CD4-positive, alpha-beta T cell (primary cell): ENCODE measurements at regions of chrX and their contacts with region 1.

Region 1: DNA sequence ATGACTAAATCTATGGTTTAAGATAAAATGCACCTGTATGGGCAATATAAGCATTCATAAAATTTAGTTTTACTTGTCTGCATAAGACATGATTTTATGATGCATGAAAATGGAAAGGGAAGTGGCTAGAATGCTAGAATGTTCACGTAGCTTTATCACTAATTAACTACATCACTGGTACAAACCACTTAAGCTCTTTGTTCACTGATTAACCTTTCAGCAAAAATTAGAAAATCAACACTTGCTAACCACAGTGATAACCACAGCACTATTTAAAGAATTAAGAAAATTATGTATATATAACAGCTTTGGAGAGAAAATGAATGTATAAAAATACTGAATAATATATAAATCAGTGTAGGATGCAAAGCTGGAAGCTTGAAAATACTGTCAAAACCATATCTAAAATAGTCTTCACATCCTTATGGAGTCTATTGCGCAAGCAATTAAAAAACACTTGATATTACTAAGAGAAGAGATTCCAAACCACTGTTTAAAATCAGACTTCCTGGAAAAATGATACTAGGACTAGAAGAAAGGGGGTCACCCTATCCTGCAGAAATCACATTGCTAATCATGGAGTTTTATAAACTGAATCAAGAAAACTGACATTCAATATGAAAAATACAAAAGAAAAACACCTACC is 51.9 kb downstream of the EFHC2 start:
- DNase-seq: peak in 1 of 14 experiments; percentile 36
- ATAC-seq: no peak
- H3K4me3 ChIP-seq: no peak overlapping the region
- H3K4me3 Mint-ChIP-seq: no peak overlapping the region
- H3K27ac ChIP-seq: no peak overlapping the region
- H3K27ac Mint-ChIP-seq: no peak overlapping the region
- H3K4me1 ChIP-seq: no peaks in the 10 kb centered on the region
- H3K4me1 Mint-ChIP-seq: no peaks in the 10 kb centered on the region
- H3K27me3 ChIP-seq: no peaks in the 10 kb centered on the region
- H3K27me3 Mint-ChIP-seq: no peaks in the 10 kb centered on the region
- CTCF ChIP-seq: no peak

Region 2: DNA sequence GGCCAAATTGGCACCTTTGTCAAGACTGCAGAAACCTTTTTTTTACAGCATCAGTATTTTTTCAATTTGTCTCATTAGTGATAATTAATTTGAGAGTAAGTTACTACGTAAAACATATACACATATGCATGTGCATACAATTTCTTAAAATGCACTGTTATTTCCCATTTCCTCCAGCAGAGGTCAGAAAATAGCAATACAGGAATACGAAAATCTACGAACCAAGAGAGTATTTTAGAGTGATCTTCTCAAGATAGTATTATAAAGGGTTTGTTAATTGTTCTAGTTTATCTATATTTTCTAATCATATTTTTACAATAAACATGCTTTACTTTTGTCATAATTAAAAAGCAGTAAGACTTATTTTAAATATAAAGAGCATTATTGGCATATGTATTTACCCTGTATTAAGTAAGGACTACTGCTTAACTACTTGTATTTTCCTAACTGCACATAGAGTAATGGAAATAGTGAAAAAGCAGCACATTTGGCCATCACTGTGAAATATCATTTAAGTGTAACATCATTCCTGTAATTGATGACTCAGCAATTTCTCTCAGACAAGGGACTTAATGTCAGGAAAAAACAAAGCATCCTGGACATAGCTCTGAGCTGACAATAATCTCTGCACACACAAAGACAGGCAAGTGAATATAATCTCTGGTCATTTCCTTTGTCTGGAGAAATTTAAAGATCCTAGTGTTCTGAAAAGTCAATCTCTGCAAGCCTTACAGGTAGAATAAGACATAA is 455.0 kb before region 1 on chrX:
- CTCF ChIA-PET with region 1: no interaction called
- POLR2A ChIA-PET with region 1: no interaction called
- intact Hi-C with region 1: no loop called
- DNase-seq: peak in 3 of 14 experiments; percentile 25 to 32 (median 32)
- ATAC-seq: no peak
- H3K4me3 ChIP-seq: no peak overlapping the region
- H3K4me3 Mint-ChIP-seq: no peak overlapping the region
- H3K27ac ChIP-seq: no peak overlapping the region
- H3K27ac Mint-ChIP-seq: no peak overlapping the region
- H3K4me1 ChIP-seq: no peaks in the 10 kb centered on the region
- H3K4me1 Mint-ChIP-seq: no peaks in the 10 kb centered on the region
- H3K27me3 ChIP-seq: peaks cover 0 to 3% of the 10 kb centered on the region in 2 experiments
- H3K27me3 Mint-ChIP-seq: no peaks in the 10 kb centered on the region
- CTCF ChIP-seq: peak; percentile 63

Region 3: GRCh38 chrX:44253575-44253942 is 38.0 kb before region 1 on chrX:
- CTCF ChIA-PET with region 1: no interaction called
- POLR2A ChIA-PET with region 1: no interaction called
- intact Hi-C with region 1: no loop called
- DNase-seq: no peak
- ATAC-seq: no peak
- H3K4me3 ChIP-seq: peak overlapping the region; percentile 19
- H3K4me3 Mint-ChIP-seq: peak overlapping the region; percentile 81
- H3K27ac ChIP-seq: peak overlapping the region; percentile 62
- H3K27ac Mint-ChIP-seq: peak overlapping the region; percentile 92
- H3K4me1 ChIP-seq: peaks cover 15% of the 10 kb centered on the region
- H3K4me1 Mint-ChIP-seq: peaks cover 38% of the 10 kb centered on the region
- H3K27me3 ChIP-seq: no peaks in the 10 kb centered on the region
- H3K27me3 Mint-ChIP-seq: no peaks in the 10 kb centered on the region
- CTCF ChIP-seq: no peak

Region 4: DNA sequence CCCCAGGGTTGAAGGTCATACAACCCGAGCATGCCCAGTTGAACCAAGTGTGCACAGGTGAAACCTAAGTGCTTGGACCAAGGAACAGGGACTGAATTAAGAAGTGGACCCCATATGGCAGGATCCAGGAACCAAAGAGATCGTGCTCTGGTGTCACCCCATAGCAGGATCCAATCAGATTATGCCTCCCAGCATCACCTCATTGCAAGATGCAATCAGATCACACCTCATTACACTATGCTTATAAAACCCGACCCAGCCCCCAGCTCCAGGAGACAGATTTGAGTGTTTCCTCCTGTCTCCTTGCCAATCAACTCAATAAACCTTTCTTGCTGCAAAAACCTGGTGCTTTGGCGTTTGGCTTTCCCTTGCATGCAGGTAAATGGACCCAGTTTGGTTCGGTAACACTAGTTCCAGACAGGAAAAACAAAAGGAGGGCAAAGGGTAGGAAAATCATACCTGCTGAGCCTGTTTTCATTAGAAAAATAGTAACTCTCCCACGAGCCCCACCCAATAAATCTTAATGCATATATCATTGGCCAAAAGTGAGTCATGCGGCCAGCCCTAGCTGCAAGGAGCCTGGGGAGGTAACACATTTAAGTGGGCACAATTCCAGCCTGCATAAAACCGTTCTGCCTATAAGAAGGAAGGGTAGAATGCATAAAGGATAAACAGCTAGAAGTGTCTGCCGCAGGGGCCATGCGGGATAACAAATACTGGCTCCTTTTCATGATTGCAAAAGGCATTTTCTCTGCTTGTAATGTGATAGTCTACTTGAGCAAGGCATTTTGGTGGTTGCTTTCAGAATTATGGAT is 14.5 kb after region 1 on chrX:
- CTCF ChIA-PET with region 1: no interaction called
- POLR2A ChIA-PET with region 1: no interaction called
- intact Hi-C with region 1: no loop called
- DNase-seq: no peak
- ATAC-seq: no peak
- H3K4me3 ChIP-seq: no peak overlapping the region
- H3K4me3 Mint-ChIP-seq: no peak overlapping the region
- H3K27ac ChIP-seq: no peak overlapping the region
- H3K27ac Mint-ChIP-seq: no peak overlapping the region
- H3K4me1 ChIP-seq: no peaks in the 10 kb centered on the region
- H3K4me1 Mint-ChIP-seq: no peaks in the 10 kb centered on the region
- H3K27me3 ChIP-seq: no peaks in the 10 kb centered on the region
- H3K27me3 Mint-ChIP-seq: no peaks in the 10 kb centered on the region
- CTCF ChIP-seq: no peak

Region 5: DNA sequence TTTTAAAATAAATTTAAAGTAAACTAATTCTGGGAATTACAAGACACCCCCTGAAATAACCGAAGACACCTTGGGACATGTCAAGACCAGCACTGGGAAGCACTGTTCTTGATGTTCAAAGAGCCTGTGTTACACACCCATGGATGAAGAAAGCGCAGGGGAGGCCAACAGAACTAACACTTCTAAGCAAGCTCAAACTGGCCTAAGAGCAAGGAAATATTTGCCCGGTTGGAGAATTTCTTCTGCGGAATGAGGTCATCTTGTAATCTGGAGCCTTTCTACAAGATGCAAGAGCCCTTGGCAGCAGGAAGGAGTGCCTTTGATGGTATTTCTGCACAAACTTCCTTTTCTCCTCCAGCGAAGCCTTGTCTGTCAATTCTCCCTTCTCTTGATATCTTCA is 61.2 kb after region 1 on chrX:
- CTCF ChIA-PET with region 1: no interaction called
- POLR2A ChIA-PET with region 1: no interaction called
- intact Hi-C with region 1: loop called in 1 of 2 experiments (anchors 5 kb)
- DNase-seq: no peak
- ATAC-seq: no peak
- H3K4me3 ChIP-seq: no peak overlapping the region
- H3K4me3 Mint-ChIP-seq: no peak overlapping the region
- H3K27ac ChIP-seq: no peak overlapping the region
- H3K27ac Mint-ChIP-seq: no peak overlapping the region
- H3K4me1 ChIP-seq: peaks cover 8% of the 10 kb centered on the region
- H3K4me1 Mint-ChIP-seq: peaks cover 28% of the 10 kb centered on the region
- H3K27me3 ChIP-seq: no peaks in the 10 kb centered on the region
- H3K27me3 Mint-ChIP-seq: no peaks in the 10 kb centered on the region
- CTCF ChIP-seq: no peak

Region 6: GRCh38 chrX:45142185-45142584 is 850.6 kb after region 1 on chrX:
- CTCF ChIA-PET with region 1: no interaction called
- POLR2A ChIA-PET with region 1: no interaction called
- intact Hi-C with region 1: no loop called
- DNase-seq: no peak
- ATAC-seq: no peak
- H3K4me3 ChIP-seq: no peak overlapping the region
- H3K4me3 Mint-ChIP-seq: no peak overlapping the region
- H3K27ac ChIP-seq: no peak overlapping the region
- H3K27ac Mint-ChIP-seq: no peak overlapping the region
- H3K4me1 ChIP-seq: no peaks in the 10 kb centered on the region
- H3K4me1 Mint-ChIP-seq: no peaks in the 10 kb centered on the region
- H3K27me3 ChIP-seq: no peaks in the 10 kb centered on the region
- H3K27me3 Mint-ChIP-seq: no peaks in the 10 kb centered on the region
- CTCF ChIP-seq: no peak